ENCODE measurements at regions of chr13 and their contacts with region 1.

Region 1: GRCh38 chr13:101416174-101417042 is at the start of gene NALCN:
- DNase-seq: no peak
- H3K4me3 ChIP-seq: peak within 1 kb of the TSS; percentile 52
- CTCF ChIP-seq: no peak

Region 2: GRCh38 chr13:101178406-101178805 is 238.0 kb before region 1 on chr13:
- in situ Hi-C with region 1: no loop called
- DNase-seq: no peak
- H3K4me3 ChIP-seq: no peak overlapping the region
- CTCF ChIP-seq: no peak

Region 3: DNA sequence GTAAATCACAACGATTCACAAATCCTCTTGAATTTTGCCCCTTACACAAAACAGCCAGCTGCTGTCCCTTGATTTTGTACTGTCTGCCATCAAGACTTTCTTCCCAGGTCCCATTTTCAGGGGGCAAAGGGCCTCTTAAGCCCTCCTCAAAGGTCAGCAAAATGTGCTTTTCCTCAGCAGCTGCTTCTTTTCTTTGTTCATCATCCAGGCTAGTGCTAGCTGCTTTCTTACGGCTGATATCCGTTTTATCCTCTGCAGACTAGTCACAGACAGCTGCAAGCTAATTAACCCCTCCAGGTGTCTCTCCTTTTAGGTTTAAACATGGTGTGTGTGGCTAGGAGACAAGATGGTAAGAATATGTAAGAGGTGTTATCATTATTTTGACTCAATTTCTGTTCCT is 91.0 kb before region 1 on chr13:
- in situ Hi-C with region 1: no loop called
- DNase-seq: no peak
- H3K4me3 ChIP-seq: no peak overlapping the region
- CTCF ChIP-seq: no peak

Region 4: DNA sequence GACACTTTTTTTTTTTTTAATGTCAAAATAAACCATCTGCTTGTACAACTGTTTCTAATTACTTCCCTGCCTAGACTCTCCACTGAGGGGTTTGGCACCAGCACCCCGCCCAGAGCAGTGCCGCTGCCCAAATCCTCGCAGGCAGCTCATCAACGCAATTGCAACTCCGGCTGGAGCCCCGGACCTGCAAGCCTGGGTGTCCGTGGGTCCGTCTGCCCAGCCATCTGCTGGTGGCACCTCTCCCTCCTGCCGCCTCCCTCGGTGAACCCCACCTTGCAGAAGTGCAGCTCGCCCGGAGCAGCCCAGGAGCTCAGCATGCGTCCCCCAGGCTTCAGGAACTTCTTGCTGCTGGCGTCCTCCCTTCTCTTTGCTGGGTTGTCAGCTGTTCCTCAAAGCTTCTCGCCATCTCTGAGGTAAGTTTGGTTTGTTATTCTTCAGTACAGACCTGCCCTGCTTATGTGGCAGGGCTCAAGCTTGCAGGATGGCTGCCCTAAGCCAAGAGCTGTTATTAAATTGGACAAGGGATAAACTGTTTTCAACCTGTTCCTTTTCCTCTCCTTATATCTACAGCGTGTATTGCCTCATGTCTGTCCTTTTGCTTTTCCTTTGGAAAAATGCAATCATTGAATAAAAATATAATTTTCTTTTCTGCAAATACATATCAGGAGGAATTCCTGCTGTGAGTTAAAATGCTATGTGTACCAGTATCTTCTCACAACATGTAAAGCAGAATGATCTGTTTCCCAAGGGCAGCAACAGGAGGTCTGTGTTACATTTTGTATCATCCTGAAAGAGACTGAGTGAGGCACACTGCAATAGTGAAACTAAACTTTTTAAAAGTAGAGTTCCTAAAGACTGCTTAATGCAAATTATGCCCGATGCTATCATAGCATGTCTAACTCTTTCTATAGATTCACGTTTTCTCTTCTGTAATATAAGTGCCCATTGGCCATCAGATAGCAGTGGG is 36.4 kb after region 1 on chr13 and contains the start of gene ITGBL1:
- in situ Hi-C with region 1: loop called (anchors 5 kb)
- DNase-seq: no peak
- H3K4me3 ChIP-seq: peak within 1 kb of the TSS; percentile 33
- CTCF ChIP-seq: no peak

Region 5: DNA sequence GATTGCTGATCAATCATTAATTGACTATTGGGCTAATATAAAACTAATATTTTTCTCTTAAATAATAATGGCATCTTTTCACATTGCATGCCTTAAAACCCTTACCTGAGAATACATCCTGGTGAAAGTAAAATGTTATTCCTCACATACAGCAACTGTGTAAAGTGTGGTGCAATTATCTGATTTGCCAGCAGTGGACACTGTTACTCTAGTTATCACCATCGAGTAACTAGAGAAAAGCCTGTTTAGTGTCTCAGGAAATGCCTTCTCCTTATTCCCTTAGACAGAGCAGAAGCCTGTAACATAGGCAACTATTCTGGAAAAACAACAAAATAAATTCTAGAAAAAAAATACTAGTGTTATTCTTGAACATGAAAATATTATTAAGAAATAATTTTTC is 525.6 kb after region 1 on chr13:
- in situ Hi-C with region 1: no loop called
- DNase-seq: peak; percentile 53
- H3K4me3 ChIP-seq: no peak overlapping the region
- CTCF ChIP-seq: peak; percentile 83